ENCODE measurements at regions of chr10 and their contacts with region 1.

Region 1: GRCh38 chr10:67520924-67521520 is 175.0 kb downstream of the CTNNA3 start:
- ATAC-seq: peak; percentile 71 to 94 (median 84)
- H3K4me3 ChIP-seq: no peak overlapping the region
- H3K27ac ChIP-seq: no peak overlapping the region
- H3K4me1 ChIP-seq: peaks cover 0 to 23% of the 10 kb centered on the region in 2 donors

Region 2: GRCh38 chr10:66925896-66926715 is 594.9 kb before region 1 on chr10 and contains the start of gene LRRTM3:
- in situ Hi-C with region 1: loop called in 3 of 9 experiments (anchors 25 kb)
- ATAC-seq: peak; percentile 83 to 100 (median 95)
- H3K4me3 ChIP-seq: peak within 1 kb of the TSS; percentile 37 to 81 (median 46)
- H3K27ac ChIP-seq: peak within 1 kb of the TSS; percentile 37 to 65
- H3K4me1 ChIP-seq: no peaks in the 10 kb centered on the region
- total RNA-seq, gene LRRTM3: 0.40 to 16.9 (median 11.4) TPM in 7 of 8 experiments, not detected in the other